HEK293T (cell line): ENCODE measurements at regions of chr6 and their contacts with region 1.

Region 1: GRCh38 chr6:82783587-82784236 is 281.9 kb downstream of the UBE3D start:
- DNase-seq: peak; percentile 55

Region 2: DNA sequence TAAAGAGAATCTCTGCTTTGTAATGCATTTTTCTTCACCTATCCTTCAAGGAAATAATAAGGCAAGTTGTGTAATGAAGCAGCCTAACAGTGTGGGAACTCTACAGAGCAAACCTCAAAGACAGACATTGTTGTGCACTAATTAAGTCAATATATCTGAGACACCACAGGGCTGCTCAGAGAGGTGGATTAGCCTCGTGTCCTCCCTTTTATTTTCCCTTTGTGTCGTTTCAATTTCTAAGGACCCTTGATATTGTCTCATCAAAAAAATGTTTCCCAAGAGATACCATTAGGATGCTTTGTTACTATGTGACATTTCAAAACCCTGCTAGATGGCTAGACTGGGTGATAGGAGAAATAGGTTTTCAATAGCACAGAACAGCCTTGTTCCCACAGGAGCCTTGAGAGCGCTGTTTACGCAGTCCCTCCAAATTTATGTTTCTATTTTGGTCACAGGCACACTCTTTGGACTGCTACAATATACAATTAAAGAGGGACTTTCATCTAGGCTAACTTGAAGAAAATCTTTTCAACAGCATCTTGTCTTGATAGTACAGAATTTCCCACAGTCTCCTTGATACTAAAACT is 258.8 kb after region 1 on chr6:
- CTCF ChIA-PET with region 1: interaction called, 10 read pairs
- POLR2A ChIA-PET with region 1: no interaction called
- DNase-seq: no peak